Breast epithelium (tissue), 4 donors: ENCODE measurements at regions of chr21 and their contacts with region 1.

Region 1: GRCh38 chr21:42063571-42064521 is 7.3 kb upstream of the UMODL1 start:
- DNase-seq: no peak
- H3K4me3 ChIP-seq: no peak overlapping the region
- H3K27ac ChIP-seq: no peak overlapping the region
- H3K4me1 ChIP-seq: no peaks in the 10 kb centered on the region
- H3K27me3 ChIP-seq: no peaks in the 10 kb centered on the region
- CTCF ChIP-seq: no peak
- POLR2A ChIP-seq: no peak

Region 2: DNA sequence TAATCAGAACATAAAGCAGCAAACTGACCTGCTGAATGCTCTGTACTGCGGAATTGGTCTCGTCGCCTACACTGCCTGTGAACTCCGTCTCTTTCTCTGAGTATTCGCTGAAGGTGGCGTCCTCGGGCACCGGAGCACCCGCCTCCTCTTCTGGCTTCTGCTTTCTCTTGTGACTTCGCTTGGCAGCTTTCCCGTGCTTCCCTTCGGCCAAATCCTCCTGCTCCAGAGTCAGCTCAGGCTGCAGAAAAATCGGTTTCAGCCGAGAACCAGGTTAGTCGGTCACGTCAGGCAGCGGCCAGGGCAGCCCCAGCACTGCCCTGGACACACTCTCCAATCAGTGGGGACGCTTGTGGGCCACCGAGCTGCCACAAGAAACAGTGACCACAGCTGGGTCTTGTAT is 261.2 kb before region 1 on chr21:
- intact Hi-C with region 1: loop called (anchors 2 kb)
- DNase-seq: peak; percentile 79 to 88
- H3K4me3 ChIP-seq: peak overlapping the region in 2 of 3 donors; percentile 17 to 54
- H3K27ac ChIP-seq: peak overlapping the region; percentile 52 to 69
- H3K4me1 ChIP-seq: peaks cover 8 to 10% of the 10 kb centered on the region in 2 donors
- H3K27me3 ChIP-seq: no peaks in the 10 kb centered on the region
- CTCF ChIP-seq: no peak
- POLR2A ChIP-seq: no peak

Region 3: GRCh38 chr21:41832596-41833496 is 231.0 kb before region 1 on chr21:
- intact Hi-C with region 1: no loop called
- DNase-seq: no peak
- H3K4me3 ChIP-seq: no peak overlapping the region
- H3K27ac ChIP-seq: no peak overlapping the region
- H3K4me1 ChIP-seq: no peaks in the 10 kb centered on the region
- H3K27me3 ChIP-seq: no peaks in the 10 kb centered on the region
- CTCF ChIP-seq: no peak
- POLR2A ChIP-seq: no peak